ENCODE measurements at regions of chr1 and their contacts with region 1.

Region 1: GRCh38 chr1:115595279-115596079 is 46.3 kb upstream of the VANGL1 start:
- DNase-seq: peak; percentile 91
- ATAC-seq: peak; percentile 95 to 96

Region 2: DNA sequence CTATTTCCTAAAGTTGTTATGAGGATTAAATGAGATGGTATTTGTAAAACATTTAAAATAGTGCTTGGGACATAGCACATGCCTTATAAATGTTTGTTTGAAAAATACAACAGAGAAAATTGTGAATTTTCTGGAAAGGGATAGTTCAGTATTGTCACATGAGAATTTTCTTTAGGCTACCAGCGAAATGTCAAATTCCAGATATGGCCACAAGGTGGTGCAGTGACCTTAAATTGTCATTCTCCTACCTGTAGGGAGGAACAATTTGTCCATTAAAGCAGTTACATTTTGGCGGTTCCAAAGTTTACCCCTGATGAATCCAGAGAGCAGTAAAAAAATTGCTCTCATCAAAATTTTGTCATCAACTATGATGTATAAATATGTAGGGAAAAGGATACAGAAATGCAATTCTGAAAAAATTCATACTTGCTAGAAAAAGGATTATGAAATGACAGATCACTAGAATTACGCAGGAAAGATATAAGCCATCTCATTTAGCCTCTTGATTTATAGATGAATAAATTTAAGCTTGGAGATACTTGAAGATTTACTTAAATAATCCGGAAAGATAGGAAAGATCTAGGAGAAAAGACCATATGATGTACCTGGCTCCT is 616.1 kb before region 1 on chr1:
- intact Hi-C with region 1: loop called in 1 of 2 experiments (anchors 10 kb)
- DNase-seq: peak; percentile 31
- ATAC-seq: no peak

Region 3: DNA sequence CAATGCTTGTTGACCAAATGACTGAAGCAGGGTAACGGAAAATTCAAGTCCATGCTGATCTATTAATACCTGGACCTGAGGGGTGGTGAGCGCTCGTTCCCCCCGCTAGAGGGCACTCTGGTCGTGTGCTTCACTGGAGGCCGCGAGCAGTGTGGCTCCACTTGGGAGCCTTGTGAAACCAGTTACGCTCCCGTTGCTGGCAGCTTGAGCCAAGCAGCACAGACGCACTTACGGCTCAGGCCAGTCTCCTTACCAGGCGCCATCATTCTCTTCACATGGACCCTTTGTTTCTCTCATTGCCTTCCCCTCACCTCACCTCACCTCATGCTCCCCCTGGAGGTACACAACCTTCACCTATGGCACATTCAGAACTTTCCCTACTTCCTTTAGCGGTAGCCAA is 456.5 kb before region 1 on chr1:
- intact Hi-C with region 1: loop called (anchors 2 to 5 kb)
- DNase-seq: peak; percentile 92
- ATAC-seq: peak; percentile 88 to 92

Region 4: DNA sequence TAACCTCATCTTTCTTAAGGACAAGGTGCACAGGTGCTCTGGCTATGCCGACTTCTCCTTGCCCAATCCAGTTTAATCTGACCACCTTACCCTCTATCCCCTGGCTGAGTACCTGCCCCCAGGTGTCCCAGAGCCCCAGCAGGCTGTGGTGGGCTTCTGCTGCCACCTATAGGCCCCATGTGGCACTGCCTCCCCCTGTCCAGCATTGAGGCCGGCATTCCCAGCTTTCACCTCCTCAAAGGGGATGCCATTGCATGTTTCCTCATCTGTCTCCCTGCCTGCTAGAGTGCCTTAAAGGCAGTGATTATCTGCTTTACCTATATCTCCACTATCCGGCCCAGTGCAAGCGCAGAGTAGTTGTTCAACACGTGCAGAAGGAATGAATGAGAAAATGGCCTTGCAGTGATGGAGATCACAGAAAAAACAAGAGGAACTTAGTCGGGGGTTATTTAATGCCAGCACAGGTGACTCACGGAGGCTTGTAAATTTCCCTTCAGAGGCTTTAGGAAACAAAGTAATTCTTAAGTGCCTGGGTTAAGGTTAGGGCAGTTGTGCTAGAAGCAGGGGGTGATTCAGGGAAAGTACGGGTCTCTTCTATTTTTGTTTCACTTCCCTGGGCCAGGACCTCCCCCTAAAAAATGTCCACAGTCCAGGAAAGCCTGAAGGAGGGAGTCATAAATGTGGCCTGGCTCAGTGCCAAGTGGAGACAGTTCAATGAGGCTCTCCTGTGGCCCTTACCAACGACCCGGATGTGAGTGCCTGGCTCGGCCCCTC is 125.6 kb before region 1 on chr1:
- intact Hi-C with region 1: loop called in 1 of 2 experiments (anchors 10 kb)
- DNase-seq: peak; percentile 45
- ATAC-seq: peak; percentile 56 to 77

Region 5: DNA sequence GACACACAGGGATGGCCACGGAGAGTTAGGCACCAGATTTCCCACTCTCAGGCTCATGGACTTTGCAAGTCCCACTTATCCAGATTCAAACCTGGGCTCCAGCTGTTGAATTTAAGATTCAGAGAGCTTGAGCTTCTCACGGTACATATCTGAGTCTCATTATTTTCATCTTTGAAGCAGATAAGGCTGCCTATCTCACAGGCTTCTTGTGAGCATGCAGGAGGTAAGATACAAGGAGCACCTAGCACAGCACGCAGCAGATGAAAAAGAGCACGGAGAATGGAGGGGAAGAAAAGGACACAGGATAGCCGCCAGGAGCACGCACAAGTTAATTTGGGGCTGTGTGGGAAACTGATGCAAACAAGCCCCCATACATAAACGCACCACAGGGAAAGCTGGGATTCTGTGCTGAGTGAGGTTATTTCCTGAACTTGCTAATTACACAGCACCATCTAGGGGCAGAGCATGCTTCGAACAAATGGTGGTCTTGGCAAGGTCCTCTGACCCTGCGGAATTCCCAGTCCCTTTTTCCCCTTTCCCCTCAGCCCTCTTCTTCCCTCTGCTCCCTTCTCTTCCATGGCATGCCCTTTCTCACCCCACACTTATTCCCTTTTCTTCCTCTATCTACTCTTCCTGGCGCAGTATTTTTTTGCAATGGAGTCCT is 88.4 kb before region 1 on chr1:
- intact Hi-C with region 1: loop called in 1 of 2 experiments (anchors 10 kb)
- DNase-seq: no peak
- ATAC-seq: peak; percentile 65 to 75

Region 6: GRCh38 chr1:115545791-115546733 is 49.4 kb before region 1 on chr1:
- intact Hi-C with region 1: loop called in 1 of 2 experiments (anchors 5 kb)
- DNase-seq: peak; percentile 50
- ATAC-seq: peak; percentile 89 to 93